K562 (cell line): ENCODE measurements at regions of chr5 and their contacts with region 1.

Region 1: DNA sequence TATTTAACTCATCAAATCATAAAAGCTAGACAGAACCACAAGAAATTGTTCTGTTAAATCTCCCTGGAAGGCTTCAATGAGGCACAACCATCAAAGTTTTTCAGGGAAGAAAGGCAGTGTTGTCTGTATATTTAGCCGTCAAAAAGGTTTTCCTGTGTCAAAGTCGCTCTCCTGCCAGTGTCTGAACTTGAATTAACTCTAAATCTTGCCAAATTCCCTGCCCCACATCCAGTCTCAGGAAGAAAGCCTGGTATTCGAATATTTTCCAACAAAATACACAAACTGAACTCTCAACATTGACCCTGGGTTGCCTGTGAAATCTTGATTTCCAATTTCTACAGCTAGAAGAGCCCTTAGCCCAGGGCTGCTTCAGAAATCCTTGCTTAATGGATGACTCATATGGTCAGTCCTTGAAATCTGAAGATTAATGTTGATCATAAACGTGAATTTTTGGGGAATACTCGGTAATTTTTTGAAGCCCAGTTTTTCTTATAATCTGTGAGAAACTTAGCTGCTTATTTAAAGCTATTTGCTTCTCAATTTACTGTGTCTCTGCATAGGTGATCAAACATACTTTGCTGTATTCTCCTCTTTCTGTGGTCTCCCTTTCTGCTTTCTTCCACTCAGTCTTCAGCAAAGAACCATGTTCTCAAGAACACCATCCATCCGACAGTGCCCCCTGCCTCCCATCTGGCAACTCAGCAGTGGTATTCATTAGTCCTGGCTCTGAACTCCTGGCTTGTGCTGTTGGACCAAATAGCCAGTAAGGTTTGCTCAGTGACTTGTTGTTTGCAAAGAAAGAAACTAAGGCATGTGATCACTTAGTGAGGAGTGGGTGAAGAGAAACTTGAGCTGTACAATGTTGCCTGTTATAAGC is 58.9 kb downstream of the NREP start:
- DNase-seq: peak in 1 of 4 experiments; percentile 14
- ATAC-seq: peak; percentile 73
- H3K4me3 ChIP-seq: no peak overlapping the region
- H3K27ac ChIP-seq: no peak overlapping the region
- H3K4me1 ChIP-seq: no peaks in the 10 kb centered on the region
- H3K27me3 ChIP-seq: no peaks in the 10 kb centered on the region
- CTCF ChIP-seq: peak in 2 of 3 experiments; percentile 27 to 34; a peak in 2 of 6 replicates
- EP300 ChIP-seq: no peak
- POLR2A ChIP-seq: no peak
- RAD21 ChIP-seq: peak; percentile 41 to 45

Region 2: GRCh38 chr5:111043712-111044506 is 654.2 kb before region 1 on chr5:
- CTCF ChIA-PET with region 1: no interaction called
- POLR2A ChIA-PET with region 1: no interaction called
- in situ Hi-C with region 1: no loop called
- intact Hi-C with region 1: no loop called
- DNase-seq: peak in 1 of 4 experiments; percentile 9
- ATAC-seq: peak; percentile 37; the same call in 1 of the 3 replicates
- H3K4me3 ChIP-seq: no peak overlapping the region
- H3K27ac ChIP-seq: no peak overlapping the region
- H3K4me1 ChIP-seq: no peaks in the 10 kb centered on the region
- H3K27me3 ChIP-seq: no peaks in the 10 kb centered on the region; a peak in 1 of 5 replicates
- CTCF ChIP-seq: no peak
- EP300 ChIP-seq: no peak
- POLR2A ChIP-seq: no peak
- RAD21 ChIP-seq: no peak

Region 3: GRCh38 chr5:111550279-111551020 is 147.7 kb before region 1 on chr5:
- CTCF ChIA-PET with region 1: no interaction called
- POLR2A ChIA-PET with region 1: no interaction called
- in situ Hi-C with region 1: no loop called
- intact Hi-C with region 1: loop called (anchors 5 kb)
- DNase-seq: peak; percentile 59 to 82 (median 67)
- ATAC-seq: peak; percentile 96
- H3K4me3 ChIP-seq: no peak overlapping the region
- H3K27ac ChIP-seq: no peak overlapping the region
- H3K4me1 ChIP-seq: peaks cover 0 to 3% of the 10 kb centered on the region in 2 experiments; a peak in 1 of 5 replicates
- H3K27me3 ChIP-seq: peaks cover 3% of the 10 kb centered on the region in 2 experiments; a peak in 3 of 5 replicates
- CTCF ChIP-seq: peak; percentile 63 to 70 (median 69)
- EP300 ChIP-seq: no peak
- POLR2A ChIP-seq: no peak
- RAD21 ChIP-seq: peak; percentile 59 to 72

Region 4: DNA sequence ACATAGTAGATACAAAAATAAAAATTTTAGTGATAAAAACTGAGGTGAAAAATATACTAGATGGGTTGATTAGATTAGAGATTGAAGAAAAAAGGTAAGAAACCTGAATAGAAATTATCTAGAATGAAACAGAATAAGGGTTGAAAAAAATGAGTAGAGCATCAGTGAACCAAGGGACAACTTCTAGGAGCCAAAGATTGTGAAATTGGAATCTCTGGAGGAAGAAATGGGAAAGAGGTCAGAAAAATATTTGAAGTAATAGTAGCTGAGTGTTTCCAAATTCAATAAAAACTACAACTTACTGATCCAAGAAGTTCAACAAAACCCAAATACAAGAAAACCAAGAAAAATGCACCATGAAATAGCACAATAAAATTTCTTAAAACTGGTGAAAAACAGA is 69.2 kb before region 1 on chr5:
- CTCF ChIA-PET with region 1: no interaction called
- POLR2A ChIA-PET with region 1: no interaction called
- in situ Hi-C with region 1: no loop called
- intact Hi-C with region 1: no loop called
- DNase-seq: no peak
- ATAC-seq: no peak
- H3K4me3 ChIP-seq: no peak overlapping the region
- H3K27ac ChIP-seq: no peak overlapping the region
- H3K4me1 ChIP-seq: no peaks in the 10 kb centered on the region
- H3K27me3 ChIP-seq: no peaks in the 10 kb centered on the region
- CTCF ChIP-seq: no peak
- EP300 ChIP-seq: no peak
- POLR2A ChIP-seq: no peak
- RAD21 ChIP-seq: no peak

Region 5: DNA sequence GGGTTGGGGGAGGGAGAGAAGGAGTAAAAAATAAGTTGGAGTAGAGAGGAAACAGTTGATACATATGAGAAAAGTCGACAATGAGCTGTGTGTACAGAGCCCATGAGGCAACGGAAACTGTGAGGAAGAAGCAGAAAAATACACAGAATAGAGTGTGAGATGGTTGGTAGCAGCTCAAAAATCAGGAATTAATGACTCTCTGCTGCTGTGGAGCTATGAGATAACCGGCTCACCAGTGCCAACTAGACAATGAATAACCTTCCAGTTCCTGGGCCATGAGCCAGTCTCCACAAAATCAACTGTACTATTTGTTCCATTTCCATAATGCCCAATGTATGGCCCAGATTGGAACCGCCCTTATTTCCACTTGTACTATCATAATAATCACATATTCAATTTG is 112.0 kb after region 1 on chr5:
- CTCF ChIA-PET with region 1: no interaction called
- POLR2A ChIA-PET with region 1: no interaction called
- in situ Hi-C with region 1: no loop called
- intact Hi-C with region 1: no loop called
- DNase-seq: no peak
- ATAC-seq: no peak
- H3K4me3 ChIP-seq: no peak overlapping the region
- H3K27ac ChIP-seq: no peak overlapping the region
- H3K4me1 ChIP-seq: no peaks in the 10 kb centered on the region
- H3K27me3 ChIP-seq: no peaks in the 10 kb centered on the region
- CTCF ChIP-seq: no peak
- EP300 ChIP-seq: no peak
- POLR2A ChIP-seq: no peak
- RAD21 ChIP-seq: no peak

Region 6: GRCh38 chr5:113140837-113141661 is 1442.9 kb after region 1 on chr5:
- CTCF ChIA-PET with region 1: no interaction called
- POLR2A ChIA-PET with region 1: no interaction called
- in situ Hi-C with region 1: no loop called
- intact Hi-C with region 1: no loop called
- DNase-seq: no peak
- ATAC-seq: no peak
- H3K4me3 ChIP-seq: no peak overlapping the region
- H3K27ac ChIP-seq: no peak overlapping the region
- H3K4me1 ChIP-seq: no peaks in the 10 kb centered on the region
- H3K27me3 ChIP-seq: peaks cover 4 to 23% of the 10 kb centered on the region in 2 experiments; a peak in 3 of 5 replicates
- CTCF ChIP-seq: no peak
- EP300 ChIP-seq: no peak
- POLR2A ChIP-seq: no peak
- RAD21 ChIP-seq: no peak